SK-N-SH (cell line): ENCODE measurements at regions of chr2 and their contacts with region 1.

Region 1: GRCh38 chr2:191566344-191566743 is 111.6 kb upstream of the NABP1 start:
- DNase-seq: peak; percentile 66
- H3K4me3 ChIP-seq: peak overlapping the region in 1 of 2 experiments; percentile 18; a peak in 1 of 4 replicates
- H3K27ac ChIP-seq: no peak overlapping the region
- H3K4me1 ChIP-seq: no peaks in the 10 kb centered on the region; a peak in 2 of 4 replicates
- H3K27me3 ChIP-seq: no peaks in the 10 kb centered on the region
- CTCF ChIP-seq: peak; percentile 88
- EP300 ChIP-seq: no peak
- RAD21 ChIP-seq: peak; percentile 81

Region 2: GRCh38 chr2:191465766-191466420 is 100.5 kb before region 1 on chr2:
- CTCF ChIA-PET with region 1: no interaction called
- POLR2A ChIA-PET with region 1: no interaction called
- DNase-seq: no peak
- H3K4me3 ChIP-seq: no peak overlapping the region
- H3K27ac ChIP-seq: peak overlapping the region in 1 of 2 experiments; percentile 13; a peak in 1 of 4 replicates
- H3K4me1 ChIP-seq: peaks cover 0 to 6% of the 10 kb centered on the region in 2 experiments; a peak in 2 of 4 replicates
- H3K27me3 ChIP-seq: no peaks in the 10 kb centered on the region
- CTCF ChIP-seq: no peak
- EP300 ChIP-seq: no peak
- RAD21 ChIP-seq: no peak

Region 3: DNA sequence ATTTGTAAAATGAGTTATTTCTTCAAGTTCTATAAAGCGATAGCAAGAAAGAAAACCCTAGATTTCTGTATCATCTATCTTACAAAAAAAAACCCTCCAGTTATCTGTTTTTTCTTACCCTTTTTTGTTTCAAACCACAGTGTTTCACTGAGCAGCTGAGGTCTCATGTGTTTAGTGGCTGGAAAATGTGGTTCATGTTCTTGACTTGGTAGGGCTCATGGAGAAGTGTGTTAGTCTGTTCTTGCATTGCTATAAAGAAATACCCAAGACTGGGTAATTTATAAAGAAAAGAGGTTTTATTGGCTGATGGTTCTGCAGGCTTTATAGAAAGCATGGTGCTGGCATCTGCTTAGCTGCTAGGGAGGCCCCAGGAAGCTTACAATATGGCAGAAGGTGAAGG is 35.7 kb before region 1 on chr2:
- CTCF ChIA-PET with region 1: no interaction called
- POLR2A ChIA-PET with region 1: no interaction called
- DNase-seq: no peak
- H3K4me3 ChIP-seq: no peak overlapping the region
- H3K27ac ChIP-seq: no peak overlapping the region
- H3K4me1 ChIP-seq: no peaks in the 10 kb centered on the region
- H3K27me3 ChIP-seq: no peaks in the 10 kb centered on the region
- CTCF ChIP-seq: no peak
- EP300 ChIP-seq: no peak
- RAD21 ChIP-seq: no peak

Region 4: DNA sequence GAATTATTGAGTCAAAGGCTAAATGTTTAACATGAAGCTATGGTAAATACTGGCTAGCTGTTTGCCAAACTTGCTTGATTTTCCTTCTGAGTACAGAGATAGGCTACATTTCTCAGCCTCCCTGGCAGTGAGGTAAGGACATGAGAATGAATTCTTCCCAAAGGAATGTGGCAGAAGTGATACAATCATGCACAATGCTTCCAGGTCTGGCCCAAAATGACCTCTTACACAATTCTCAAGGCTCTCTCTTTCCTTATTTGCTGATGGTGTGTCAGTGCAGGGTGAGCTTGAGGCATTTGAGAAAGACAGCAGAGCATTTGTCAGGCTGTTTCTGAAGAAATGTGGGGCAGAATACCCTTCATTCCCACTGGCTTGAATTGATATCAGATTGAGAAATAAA is 16.0 kb after region 1 on chr2:
- CTCF ChIA-PET with region 1: interaction called, 17 read pairs
- POLR2A ChIA-PET with region 1: no interaction called
- DNase-seq: no peak
- H3K4me3 ChIP-seq: no peak overlapping the region
- H3K27ac ChIP-seq: peak overlapping the region in 1 of 2 experiments; percentile 62; a peak in 2 of 4 replicates
- H3K4me1 ChIP-seq: no peaks in the 10 kb centered on the region; a peak in 1 of 4 replicates
- H3K27me3 ChIP-seq: no peaks in the 10 kb centered on the region
- CTCF ChIP-seq: no peak
- EP300 ChIP-seq: peak in 1 of 2 experiments; percentile 70; a peak in 1 of 4 replicates
- RAD21 ChIP-seq: no peak

Region 5: GRCh38 chr2:191691016-191691735 is 124.8 kb after region 1 on chr2:
- CTCF ChIA-PET with region 1: interaction called, 21 read pairs
- POLR2A ChIA-PET with region 1: no interaction called
- DNase-seq: peak; percentile 62
- H3K4me3 ChIP-seq: no peak overlapping the region; a peak in 1 of 4 replicates
- H3K27ac ChIP-seq: peak overlapping the region in 1 of 2 experiments; percentile 38; a peak in 1 of 4 replicates
- H3K4me1 ChIP-seq: peaks cover 4 to 22% of the 10 kb centered on the region in 2 experiments; a peak in 3 of 4 replicates
- H3K27me3 ChIP-seq: no peaks in the 10 kb centered on the region
- CTCF ChIP-seq: peak; percentile 82
- EP300 ChIP-seq: peak in 1 of 2 experiments; percentile 51; a peak in 1 of 4 replicates
- RAD21 ChIP-seq: peak; percentile 78